GM12878 (cell line): ENCODE measurements at regions of chr3 and their contacts with region 1.

Region 1: DNA sequence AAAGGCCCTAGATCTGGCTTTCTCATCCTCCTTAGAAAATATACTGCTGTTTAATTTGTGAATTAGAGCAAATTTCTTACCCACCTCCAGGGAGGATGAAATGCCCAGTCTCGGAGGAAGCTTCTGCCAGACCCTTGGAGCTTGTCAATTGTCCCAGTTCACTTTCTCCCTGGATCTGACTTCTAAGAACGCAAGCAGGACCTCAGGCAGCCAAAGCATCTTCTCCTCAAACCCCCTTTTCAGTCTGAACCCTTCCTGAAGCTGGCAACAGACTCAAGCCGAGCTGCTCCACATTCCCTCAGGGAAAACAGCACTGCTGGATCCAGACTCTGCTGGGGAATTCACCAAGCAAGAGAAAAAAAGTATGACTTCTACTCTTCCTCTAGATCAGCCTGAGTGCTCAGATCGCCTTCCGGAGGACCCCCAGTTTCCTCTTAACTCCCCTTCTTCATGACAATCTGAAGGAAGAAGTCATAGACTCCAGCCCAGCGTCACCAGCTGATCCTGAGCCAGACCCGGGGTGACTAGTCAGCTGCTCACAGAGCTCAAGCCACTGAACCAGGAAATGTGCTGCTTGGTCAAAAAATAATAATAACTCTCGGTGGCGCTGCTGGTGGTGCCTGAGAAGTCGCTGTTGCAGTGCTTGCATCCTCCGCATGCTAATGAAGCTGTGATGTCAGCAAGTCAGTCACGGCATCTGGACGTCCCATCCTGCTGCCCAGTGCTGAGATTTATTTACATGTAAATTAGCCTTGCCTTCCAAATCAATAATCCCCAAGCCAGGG is at the start of gene PRICKLE2:
- DNase-seq: peak; percentile 35
- ATAC-seq: peak; percentile 90
- H3K4me3 ChIP-seq: no peak within 1 kb of the TSS
- H3K27ac ChIP-seq: no peak within 1 kb of the TSS
- H3K4me1 ChIP-seq: no peaks in the 10 kb centered on the region; the same call in 1 of the 2 replicates
- H3K27me3 ChIP-seq: no peaks in the 10 kb centered on the region
- CTCF ChIP-seq: no peak; a peak in 1 of 6 replicates
- EP300 ChIP-seq: no peak
- POLR2A ChIP-seq: 0 out of 2 replicates have a peak, but pooled peaks have one; percentile 36
- RAD21 ChIP-seq: peak; percentile 7; the same call in 1 of the 2 replicates
- polyA plus RNA-seq, gene PRICKLE2: 0.11 to 0.24 TPM

Region 2: GRCh38 chr3:64163755-64164148 is 61.3 kb before region 1 on chr3:
- CTCF ChIA-PET with region 1: interaction called, 16 read pairs
- POLR2A ChIA-PET with region 1: no interaction called
- RAD21 ChIA-PET with region 1: interaction called, 29 read pairs
- SMC1A ChIA-PET with region 1: interaction called, 21 read pairs
- in situ Hi-C with region 1: no loop called
- intact Hi-C with region 1: no loop called
- DNase-seq: peak; percentile 25
- ATAC-seq: peak; percentile 80
- H3K4me3 ChIP-seq: no peak overlapping the region
- H3K27ac ChIP-seq: no peak overlapping the region
- H3K4me1 ChIP-seq: no peaks in the 10 kb centered on the region
- H3K27me3 ChIP-seq: no peaks in the 10 kb centered on the region
- CTCF ChIP-seq: no peak
- EP300 ChIP-seq: 0 out of 4 replicates have a peak, but pooled peaks of 1 of the 2 experiments have one; percentile 42
- POLR2A ChIP-seq: no peak
- RAD21 ChIP-seq: no peak

Region 3: DNA sequence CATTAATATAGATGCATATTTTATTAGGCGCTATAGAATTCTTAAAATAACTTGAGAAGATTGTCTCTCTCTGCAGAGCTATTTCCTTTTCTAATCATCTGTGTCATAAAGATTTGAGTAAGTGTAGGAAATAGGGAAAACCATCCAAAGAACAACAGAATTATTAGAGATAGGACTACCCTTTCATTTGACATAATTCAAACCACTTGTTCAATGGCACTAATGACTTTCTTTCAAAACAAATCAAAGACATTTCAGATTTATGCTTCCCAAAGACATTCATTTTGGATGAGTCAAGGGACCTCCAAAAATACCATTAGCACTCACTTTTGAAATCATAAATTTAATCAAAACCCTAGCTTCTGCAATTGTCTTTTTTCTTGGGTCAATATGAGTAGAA is 29.2 kb before region 1 on chr3:
- CTCF ChIA-PET with region 1: no interaction called
- POLR2A ChIA-PET with region 1: no interaction called
- RAD21 ChIA-PET with region 1: interaction called, 3 read pairs
- SMC1A ChIA-PET with region 1: interaction called, 15 read pairs
- in situ Hi-C with region 1: no loop called
- intact Hi-C with region 1: no loop called
- DNase-seq: no peak
- ATAC-seq: no peak
- H3K4me3 ChIP-seq: no peak overlapping the region
- H3K27ac ChIP-seq: no peak overlapping the region
- H3K4me1 ChIP-seq: no peaks in the 10 kb centered on the region
- H3K27me3 ChIP-seq: no peaks in the 10 kb centered on the region
- CTCF ChIP-seq: no peak
- EP300 ChIP-seq: no peak
- POLR2A ChIP-seq: no peak
- RAD21 ChIP-seq: no peak

Region 4: GRCh38 chr3:64244011-64244942 is 19.3 kb after region 1 on chr3:
- CTCF ChIA-PET with region 1: interaction called, 44 read pairs
- POLR2A ChIA-PET with region 1: interaction called, 4 read pairs
- RAD21 ChIA-PET with region 1: interaction called, 13 read pairs
- SMC1A ChIA-PET with region 1: interaction called, 27 read pairs
- in situ Hi-C with region 1: no loop called
- intact Hi-C with region 1: no loop called
- DNase-seq: no peak
- ATAC-seq: peak; percentile 77
- H3K4me3 ChIP-seq: no peak overlapping the region
- H3K27ac ChIP-seq: no peak overlapping the region
- H3K4me1 ChIP-seq: no peaks in the 10 kb centered on the region
- H3K27me3 ChIP-seq: no peaks in the 10 kb centered on the region
- CTCF ChIP-seq: peak; percentile 24 to 51 (median 35); a peak in 3 of 6 replicates
- EP300 ChIP-seq: no peak
- POLR2A ChIP-seq: no peak
- RAD21 ChIP-seq: peak; percentile 44; the same call in 1 of the 2 replicates

Region 5: GRCh38 chr3:64321747-64322146 is 96.7 kb after region 1 on chr3:
- CTCF ChIA-PET with region 1: interaction called, 4 read pairs
- POLR2A ChIA-PET with region 1: no interaction called
- RAD21 ChIA-PET with region 1: no interaction called
- SMC1A ChIA-PET with region 1: interaction called, 25 read pairs
- in situ Hi-C with region 1: no loop called
- intact Hi-C with region 1: no loop called
- DNase-seq: no peak
- ATAC-seq: no peak
- H3K4me3 ChIP-seq: no peak overlapping the region
- H3K27ac ChIP-seq: no peak overlapping the region
- H3K4me1 ChIP-seq: no peaks in the 10 kb centered on the region
- H3K27me3 ChIP-seq: no peaks in the 10 kb centered on the region
- CTCF ChIP-seq: no peak
- EP300 ChIP-seq: no peak
- POLR2A ChIP-seq: no peak
- RAD21 ChIP-seq: no peak

Region 6: DNA sequence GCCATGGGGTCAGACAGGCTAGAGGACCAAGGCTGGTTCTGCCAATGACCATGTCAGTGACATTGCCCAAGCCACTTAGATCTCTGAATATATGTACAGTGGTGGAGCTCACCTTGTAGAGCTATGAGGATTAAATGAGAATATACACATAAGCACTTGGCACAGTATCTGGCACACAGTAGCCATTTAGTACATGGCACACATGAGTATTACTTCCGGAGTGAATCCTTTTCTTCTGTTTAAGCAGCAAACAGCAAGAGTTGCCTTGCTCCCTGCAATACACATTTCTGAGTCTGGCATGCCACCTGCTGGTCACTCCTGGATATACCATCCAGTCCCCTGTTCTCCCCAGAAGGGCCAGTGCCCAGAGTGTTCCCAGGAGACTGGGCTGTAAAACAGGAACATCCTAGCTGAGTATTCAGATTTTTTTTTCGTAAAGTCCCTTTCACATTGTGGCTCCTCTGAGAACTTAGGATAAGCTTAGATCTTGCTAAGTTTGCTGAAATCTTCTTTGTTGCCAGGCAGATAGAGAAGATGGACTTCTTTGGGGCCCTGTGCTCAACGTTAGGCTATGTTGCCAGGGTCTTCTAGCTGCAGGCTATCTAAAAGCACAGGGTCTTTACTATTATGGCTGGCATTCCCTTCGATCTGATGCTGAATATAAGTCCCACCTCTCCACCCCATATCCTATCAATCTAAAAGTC is 259.4 kb after region 1 on chr3:
- CTCF ChIA-PET with region 1: interaction called, 54 read pairs
- POLR2A ChIA-PET with region 1: no interaction called
- RAD21 ChIA-PET with region 1: interaction called, 12 read pairs
- SMC1A ChIA-PET with region 1: interaction called, 34 read pairs
- in situ Hi-C with region 1: no loop called
- intact Hi-C with region 1: no loop called
- DNase-seq: peak; percentile 45
- ATAC-seq: peak; percentile 99
- H3K4me3 ChIP-seq: no peak overlapping the region
- H3K27ac ChIP-seq: no peak overlapping the region
- H3K4me1 ChIP-seq: no peaks in the 10 kb centered on the region
- H3K27me3 ChIP-seq: peaks cover under 1 to 5% of the 10 kb centered on the region in 2 experiments; a peak in 1 of 4 replicates
- CTCF ChIP-seq: peak; percentile 76 to 94 (median 88); a peak in 5 of 6 replicates
- EP300 ChIP-seq: no peak
- POLR2A ChIP-seq: no peak
- RAD21 ChIP-seq: peak; percentile 98